ENCODE measurements at regions of chr15 and their contacts with region 1.

Region 1: DNA sequence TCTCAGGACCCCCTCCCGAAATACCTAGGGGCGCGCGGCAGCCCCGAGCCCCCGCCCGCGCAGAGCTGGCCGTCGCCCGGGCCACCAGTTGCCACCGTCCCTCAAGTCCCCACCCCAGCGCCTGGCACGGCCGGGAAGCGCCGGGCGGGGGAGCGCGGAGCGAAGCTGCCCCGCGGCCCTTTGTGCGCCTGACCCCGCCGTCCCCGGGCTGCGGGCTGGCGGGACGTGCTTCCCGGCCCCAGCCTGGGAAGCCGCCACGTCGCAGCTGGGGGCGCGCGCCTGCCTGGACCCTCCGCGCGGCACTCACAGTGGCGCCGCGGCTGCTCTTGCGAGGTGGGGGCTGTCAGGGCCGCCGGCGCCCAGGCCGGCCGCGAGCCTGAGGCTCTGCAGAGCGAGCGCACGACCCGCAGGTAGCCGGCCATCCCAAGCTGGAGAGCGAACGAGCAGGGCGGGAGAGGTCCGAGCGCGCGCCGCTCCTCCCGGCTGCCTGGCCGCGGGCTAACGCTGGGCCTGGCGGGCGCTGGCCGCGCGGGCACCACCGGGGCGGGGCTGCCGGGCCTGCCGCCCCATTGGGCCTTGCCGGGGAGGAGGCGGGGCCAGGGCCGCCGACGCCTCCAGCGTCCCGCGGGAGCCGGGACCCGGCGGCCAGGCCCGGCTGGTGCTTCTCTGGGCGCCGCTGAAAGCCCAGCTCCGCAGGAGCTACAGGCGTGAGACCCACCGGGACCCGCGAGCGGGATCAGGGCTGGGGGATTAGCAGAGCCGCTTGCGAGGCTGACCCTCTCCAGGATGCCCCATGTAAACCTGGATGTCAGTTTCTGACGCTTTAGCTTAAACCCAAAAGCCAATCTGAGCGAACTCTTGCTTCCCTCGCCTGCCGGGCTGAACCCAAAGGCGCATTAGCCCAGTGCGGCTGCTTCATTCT is at the start of gene IDH2:
- DNase-seq: peak; percentile 47 to 78 (median 75)
- ATAC-seq: peak; percentile 73 to 81
- H3K4me3 Mint-ChIP-seq: peak within 1 kb of the TSS; percentile 84 to 94 (median 91)
- H3K27ac Mint-ChIP-seq: peak within 1 kb of the TSS; percentile 94 to 99 (median 98)
- H3K4me1 Mint-ChIP-seq: peaks cover 23 to 51% (median 50%) of the 10 kb centered on the region in 4 donors
- H3K27me3 Mint-ChIP-seq: no peaks in the 10 kb centered on the region
- polyA plus RNA-seq, gene IDH2: 71.5 to 97.7 (median 80.1) TPM

Region 2: GRCh38 chr15:89893696-89894455 is 208.4 kb before region 1 on chr15 and contains the start of gene AP3S2:
- POLR2A ChIA-PET with region 1: interaction called, 13 read pairs
- DNase-seq: peak; percentile 70 to 92 (median 86)
- ATAC-seq: peak; percentile 94 to 95
- H3K4me3 Mint-ChIP-seq: peak within 1 kb of the TSS; percentile 93 to 99 (median 97)
- H3K27ac Mint-ChIP-seq: peak within 1 kb of the TSS; percentile 92 to 98 (median 96)
- H3K4me1 Mint-ChIP-seq: peaks cover 6 to 42% (median 35%) of the 10 kb centered on the region in 4 donors
- H3K27me3 Mint-ChIP-seq: no peaks in the 10 kb centered on the region
- polyA plus RNA-seq, gene AP3S2: 30.7 to 40.7 (median 36.9) TPM

Region 3: GRCh38 chr15:90119347-90119746 is 17.1 kb after region 1 on chr15:
- POLR2A ChIA-PET with region 1: interaction called, 10 read pairs
- DNase-seq: no peak
- ATAC-seq: no peak
- H3K4me3 Mint-ChIP-seq: no peak overlapping the region
- H3K27ac Mint-ChIP-seq: peak overlapping the region in 1 of 10 donors; percentile 80
- H3K4me1 Mint-ChIP-seq: no peaks in the 10 kb centered on the region
- H3K27me3 Mint-ChIP-seq: peaks cover 0 to 4% (median 0%) of the 10 kb centered on the region in 5 donors

Region 4: GRCh38 chr15:90201130-90201949 is 99.1 kb after region 1 on chr15 and contains the start of gene SEMA4B:
- POLR2A ChIA-PET with region 1: interaction called, 11 read pairs
- DNase-seq: peak; percentile 52 to 81 (median 71)
- ATAC-seq: peak; percentile 90 to 93
- H3K4me3 Mint-ChIP-seq: peak within 1 kb of the TSS; percentile 82 to 94 (median 88)
- H3K27ac Mint-ChIP-seq: peak within 1 kb of the TSS; percentile 84 to 92 (median 90)
- H3K4me1 Mint-ChIP-seq: peaks cover 8 to 55% (median 22%) of the 10 kb centered on the region in 4 donors
- H3K27me3 Mint-ChIP-seq: no peaks in the 10 kb centered on the region
- polyA plus RNA-seq, gene SEMA4B: 4.1 to 6.8 (median 5.0) TPM

Measured in naive thymus-derived CD8-positive, alpha-beta T cell (primary cell).